Left ventricle myocardium inferior (tissue), 1 donor: ENCODE measurements at regions of chr12 and their contacts with region 1.

Region 1: DNA sequence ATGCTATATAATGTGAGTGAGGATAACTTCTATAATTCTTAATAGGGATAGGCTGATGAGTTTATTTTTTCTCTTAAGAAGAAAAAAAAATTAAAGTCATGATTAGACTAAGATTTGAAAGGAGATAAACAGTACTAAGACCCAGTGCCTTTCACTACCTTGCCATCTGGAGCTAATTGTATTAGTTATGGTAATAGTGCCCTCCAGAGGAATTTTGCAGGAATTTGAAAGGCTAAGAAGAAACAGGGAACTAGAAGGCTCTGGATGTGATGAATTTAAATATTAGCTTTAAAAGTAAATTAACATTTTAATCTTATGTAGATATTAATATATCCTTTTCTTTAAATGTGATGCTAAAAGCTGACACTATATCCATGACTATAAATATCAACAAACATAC is 36.6 kb upstream of the PIK3C2G start:
- DNase-seq: no peak
- H3K4me3 ChIP-seq: no peak overlapping the region
- H3K27ac ChIP-seq: no peak overlapping the region
- H3K4me1 ChIP-seq: no peaks in the 10 kb centered on the region
- H3K27me3 ChIP-seq: no peaks in the 10 kb centered on the region
- CTCF ChIP-seq: peak; percentile 54

Region 2: DNA sequence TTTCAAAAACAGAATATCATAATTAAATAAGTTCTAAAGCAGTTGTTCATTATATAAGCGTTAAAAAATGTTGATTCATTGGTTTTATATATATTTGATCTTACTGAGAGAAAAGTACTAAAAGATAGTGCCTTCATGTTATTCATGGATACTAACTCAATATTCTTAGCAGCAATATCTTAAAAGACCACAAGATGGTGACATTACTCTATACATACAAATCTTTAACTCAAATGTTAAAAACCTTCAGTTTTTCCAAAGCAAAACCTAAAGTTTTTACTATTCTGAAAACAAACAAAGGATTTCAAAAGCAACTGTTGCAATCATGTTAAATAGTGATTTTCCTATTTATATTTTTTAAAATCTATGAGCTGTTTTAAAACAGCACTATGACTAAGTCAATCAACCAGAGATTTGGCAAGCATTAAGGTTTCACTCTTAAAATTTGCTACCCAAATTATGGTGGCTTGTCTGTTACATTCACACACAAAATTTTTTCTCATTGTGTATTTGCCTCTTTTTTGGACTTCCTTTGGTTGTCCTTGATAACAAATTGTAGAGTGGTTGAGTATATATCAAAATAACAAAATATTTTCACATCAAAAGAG is 84.7 kb before region 1 on chr12:
- intact Hi-C with region 1: loop called (anchors 10 kb)
- DNase-seq: no peak
- H3K4me3 ChIP-seq: no peak overlapping the region
- H3K27ac ChIP-seq: no peak overlapping the region
- H3K4me1 ChIP-seq: peaks cover 13% of the 10 kb centered on the region
- H3K27me3 ChIP-seq: no peaks in the 10 kb centered on the region
- CTCF ChIP-seq: peak; percentile 75